ENCODE measurements at regions of chr12 and their contacts with region 1.

Region 1: DNA sequence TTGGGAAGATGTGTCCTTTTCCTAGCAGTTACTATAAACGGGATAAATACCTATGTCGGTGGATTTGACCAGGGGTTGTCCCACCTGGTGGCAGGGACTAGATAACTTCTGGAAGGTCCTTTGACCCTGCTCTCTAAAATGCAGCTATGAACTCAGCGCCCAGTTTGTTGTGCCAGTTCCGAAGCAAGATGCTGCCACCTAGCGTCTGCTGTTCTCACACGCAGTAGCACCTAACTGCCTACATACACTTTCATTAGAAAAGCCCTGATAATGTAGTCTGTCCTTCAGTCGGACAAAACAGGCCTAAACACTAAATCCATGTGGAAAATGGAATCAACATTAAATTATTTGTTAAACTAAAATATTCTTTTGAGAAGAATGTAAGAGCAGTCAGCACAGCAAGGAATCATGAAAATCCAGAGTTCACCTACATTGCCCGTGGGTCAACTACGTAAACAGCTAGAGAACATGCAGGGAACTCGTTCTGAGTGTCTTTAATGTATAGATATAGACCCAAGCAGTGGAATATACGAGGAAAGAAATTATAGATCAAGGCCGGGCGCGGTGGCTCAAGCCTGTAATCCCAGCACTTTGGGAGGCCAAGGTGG is 51.1 kb upstream of the CRACR2A start:
- DNase-seq: peak; percentile 76
- H3K4me3 ChIP-seq: no peak overlapping the region
- H3K27ac ChIP-seq: no peak overlapping the region
- H3K4me1 ChIP-seq: no peaks in the 10 kb centered on the region
- H3K27me3 ChIP-seq: no peaks in the 10 kb centered on the region
- CTCF ChIP-seq: peak; percentile 77

Region 2: DNA sequence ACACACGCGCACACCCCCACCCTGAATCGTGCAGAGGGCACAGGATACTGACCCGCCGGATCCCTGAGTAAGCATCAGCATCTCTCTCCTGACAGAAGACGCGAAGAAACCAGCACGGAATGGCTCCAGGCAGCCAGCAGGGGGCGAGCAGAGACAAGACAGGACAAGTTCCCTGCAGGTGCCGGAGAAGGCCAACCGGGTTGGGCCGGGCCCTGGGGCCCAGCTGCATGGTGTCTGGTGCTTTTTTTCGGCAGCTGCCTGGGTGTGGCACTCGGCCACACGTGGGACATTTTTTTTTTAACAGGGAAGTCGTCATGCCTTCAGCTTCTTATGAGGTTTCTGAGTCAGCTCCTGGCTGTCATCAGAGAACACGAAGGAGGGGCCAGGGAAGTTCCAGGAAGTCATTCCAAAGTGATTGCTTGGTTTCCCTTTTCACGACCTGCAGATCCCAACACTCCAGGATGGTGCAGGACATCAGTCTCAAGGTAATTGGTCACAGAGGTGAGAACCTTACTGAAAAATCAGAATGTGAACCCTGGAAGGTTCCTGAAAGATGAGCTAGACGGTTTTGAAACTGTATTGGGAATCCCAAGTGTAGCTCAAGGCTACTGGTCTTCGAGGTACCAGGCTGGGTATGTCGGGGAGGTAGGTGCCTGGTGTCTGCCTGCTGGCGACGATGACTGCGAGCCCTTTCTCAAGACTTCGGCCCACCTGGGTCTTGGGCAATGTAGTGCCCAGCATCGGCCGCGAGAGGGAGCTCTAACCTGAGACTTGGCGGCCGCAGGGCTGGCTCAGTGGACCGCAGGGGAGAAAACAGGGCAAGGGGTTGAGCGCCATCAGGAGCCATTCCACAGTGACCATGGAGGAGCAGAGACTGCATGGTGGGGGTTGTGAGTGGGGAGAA is 503.8 kb before region 1 on chr12:
- intact Hi-C with region 1: loop called (anchors 2 kb)
- DNase-seq: peak; percentile 93
- H3K4me3 ChIP-seq: no peak overlapping the region
- H3K27ac ChIP-seq: peak overlapping the region; percentile 49
- H3K4me1 ChIP-seq: no peaks in the 10 kb centered on the region
- H3K27me3 ChIP-seq: no peaks in the 10 kb centered on the region
- CTCF ChIP-seq: peak; percentile 97